A549 (cell line): ENCODE measurements at regions of chr5 and their contacts with region 1.

Region 1: DNA sequence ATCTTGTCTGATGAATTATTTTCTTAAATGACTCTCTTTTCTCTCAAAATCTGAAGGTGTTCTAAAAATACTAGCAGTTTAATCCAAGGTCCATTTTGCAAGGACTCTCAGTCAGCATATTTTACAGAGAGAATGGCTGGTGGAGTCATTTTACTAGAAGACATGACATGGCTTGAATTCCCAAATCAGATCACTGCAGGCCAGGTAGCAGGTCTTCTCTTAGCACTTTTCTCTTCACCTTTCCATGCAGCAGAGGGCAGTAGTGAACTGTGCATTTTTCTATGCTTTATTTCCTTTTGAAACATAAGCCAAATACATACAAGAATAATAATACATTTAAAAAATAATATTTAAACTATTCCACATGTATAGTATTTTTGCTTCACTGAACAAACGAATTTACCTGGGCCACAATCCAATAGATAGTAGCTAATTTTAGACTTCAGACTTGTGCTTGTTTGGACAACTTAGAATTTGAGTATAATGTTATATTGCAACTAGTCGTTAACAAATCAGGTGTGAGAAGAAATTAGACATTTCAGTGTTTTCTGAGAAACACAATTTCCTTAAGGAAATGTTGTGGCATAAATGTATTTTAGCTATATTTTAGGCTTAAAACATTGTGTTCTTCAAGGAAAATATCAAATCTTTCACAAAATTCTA is 289.4 kb upstream of the DAB2 start:
- DNase-seq: peak; percentile 27 to 81
- ATAC-seq: peak; percentile 71 to 72; a peak in 5 of 6 replicates
- H3K4me3 ChIP-seq: no peak overlapping the region
- H3K27ac ChIP-seq: peak overlapping the region; percentile 49; a peak in 4 of 6 replicates
- H3K4me1 ChIP-seq: peaks cover 39% of the 10 kb centered on the region
- CTCF ChIP-seq: peak; percentile 88
- EP300 ChIP-seq: no peak
- POLR2A ChIP-seq: no peak
- RAD21 ChIP-seq: peak; percentile 93

Region 2: DNA sequence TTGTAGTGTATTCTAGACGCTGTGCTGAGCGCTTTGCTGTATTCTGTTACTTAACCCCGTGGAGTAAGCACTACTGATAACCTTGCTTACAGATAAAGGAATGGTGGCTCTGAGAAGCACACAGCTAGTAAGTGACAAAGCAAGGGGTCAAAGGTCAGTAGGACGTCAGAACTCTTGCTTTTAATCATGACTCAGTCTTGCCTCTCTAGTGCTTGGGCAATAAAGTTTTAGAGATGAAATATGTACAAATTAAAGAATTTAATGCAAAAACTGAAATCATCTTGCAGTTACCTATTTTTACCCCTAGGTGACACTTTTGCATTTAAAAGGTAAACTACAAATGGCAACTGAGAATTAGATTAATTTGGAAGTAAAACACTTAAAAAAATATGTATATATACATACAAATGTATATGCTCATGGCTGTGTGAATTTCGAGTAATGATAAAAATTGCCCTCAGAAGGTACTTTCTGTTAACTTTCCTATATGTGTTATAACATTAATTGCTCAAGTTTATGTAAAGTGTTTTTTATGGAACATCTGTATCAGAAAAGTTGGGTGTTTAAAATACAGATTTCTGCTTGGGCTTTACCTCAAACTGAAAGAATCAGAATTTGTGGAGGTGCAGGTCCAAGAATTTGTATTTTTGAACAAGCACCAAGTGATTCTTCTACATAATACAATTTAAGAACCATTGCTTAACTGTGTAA is 114.3 kb before region 1 on chr5:
- CTCF ChIA-PET with region 1: interaction called, 10 read pairs
- POLR2A ChIA-PET with region 1: no interaction called
- DNase-seq: peak; percentile 17 to 67
- ATAC-seq: peak; percentile 54 to 73
- H3K4me3 ChIP-seq: no peak overlapping the region
- H3K27ac ChIP-seq: no peak overlapping the region
- H3K4me1 ChIP-seq: peaks cover 11% of the 10 kb centered on the region; the same call in 2 of the 3 replicates
- CTCF ChIP-seq: peak; percentile 72
- EP300 ChIP-seq: no peak
- POLR2A ChIP-seq: no peak
- RAD21 ChIP-seq: peak; percentile 75 to 77

Region 3: GRCh38 chr5:39700523-39700922 is 13.6 kb before region 1 on chr5:
- CTCF ChIA-PET with region 1: interaction called, 11 read pairs
- POLR2A ChIA-PET with region 1: no interaction called
- DNase-seq: no peak
- ATAC-seq: no peak
- H3K4me3 ChIP-seq: no peak overlapping the region
- H3K27ac ChIP-seq: no peak overlapping the region
- H3K4me1 ChIP-seq: no peaks in the 10 kb centered on the region
- CTCF ChIP-seq: no peak
- EP300 ChIP-seq: no peak
- POLR2A ChIP-seq: no peak
- RAD21 ChIP-seq: no peak

Region 4: DNA sequence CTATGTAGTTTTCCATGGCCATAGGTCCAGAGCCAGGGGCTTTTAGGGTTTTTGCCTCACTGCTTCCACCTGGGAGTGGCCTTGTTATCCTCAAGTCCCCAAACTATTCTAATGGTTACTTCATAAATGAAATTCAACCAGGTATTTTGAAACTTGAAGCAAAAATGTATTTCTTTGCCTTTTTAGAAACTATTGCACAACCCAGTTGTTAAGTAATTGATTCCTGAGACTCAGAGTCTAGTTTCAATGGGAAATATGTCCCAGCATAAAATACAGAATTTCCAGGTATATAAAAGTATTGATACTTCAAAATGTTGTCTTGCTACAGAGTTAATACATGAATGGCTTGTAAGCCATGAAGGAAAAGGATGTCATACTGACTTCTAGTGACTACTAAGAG is 166.8 kb after region 1 on chr5:
- CTCF ChIA-PET with region 1: no interaction called
- POLR2A ChIA-PET with region 1: no interaction called
- DNase-seq: no peak
- ATAC-seq: no peak
- H3K4me3 ChIP-seq: no peak overlapping the region
- H3K27ac ChIP-seq: no peak overlapping the region
- H3K4me1 ChIP-seq: no peaks in the 10 kb centered on the region
- CTCF ChIP-seq: no peak
- EP300 ChIP-seq: no peak
- POLR2A ChIP-seq: no peak
- RAD21 ChIP-seq: no peak

Region 5: GRCh38 chr5:39948867-39949468 is 234.8 kb after region 1 on chr5:
- CTCF ChIA-PET with region 1: interaction called, 16 read pairs
- POLR2A ChIA-PET with region 1: no interaction called
- DNase-seq: peak; percentile 26 to 77
- ATAC-seq: peak; percentile 74 to 86; a peak in 5 of 6 replicates
- H3K4me3 ChIP-seq: no peak overlapping the region
- H3K27ac ChIP-seq: no peak overlapping the region
- H3K4me1 ChIP-seq: no peaks in the 10 kb centered on the region
- CTCF ChIP-seq: peak; percentile 73
- EP300 ChIP-seq: no peak
- POLR2A ChIP-seq: no peak
- RAD21 ChIP-seq: peak; percentile 77 to 83

Region 6: DNA sequence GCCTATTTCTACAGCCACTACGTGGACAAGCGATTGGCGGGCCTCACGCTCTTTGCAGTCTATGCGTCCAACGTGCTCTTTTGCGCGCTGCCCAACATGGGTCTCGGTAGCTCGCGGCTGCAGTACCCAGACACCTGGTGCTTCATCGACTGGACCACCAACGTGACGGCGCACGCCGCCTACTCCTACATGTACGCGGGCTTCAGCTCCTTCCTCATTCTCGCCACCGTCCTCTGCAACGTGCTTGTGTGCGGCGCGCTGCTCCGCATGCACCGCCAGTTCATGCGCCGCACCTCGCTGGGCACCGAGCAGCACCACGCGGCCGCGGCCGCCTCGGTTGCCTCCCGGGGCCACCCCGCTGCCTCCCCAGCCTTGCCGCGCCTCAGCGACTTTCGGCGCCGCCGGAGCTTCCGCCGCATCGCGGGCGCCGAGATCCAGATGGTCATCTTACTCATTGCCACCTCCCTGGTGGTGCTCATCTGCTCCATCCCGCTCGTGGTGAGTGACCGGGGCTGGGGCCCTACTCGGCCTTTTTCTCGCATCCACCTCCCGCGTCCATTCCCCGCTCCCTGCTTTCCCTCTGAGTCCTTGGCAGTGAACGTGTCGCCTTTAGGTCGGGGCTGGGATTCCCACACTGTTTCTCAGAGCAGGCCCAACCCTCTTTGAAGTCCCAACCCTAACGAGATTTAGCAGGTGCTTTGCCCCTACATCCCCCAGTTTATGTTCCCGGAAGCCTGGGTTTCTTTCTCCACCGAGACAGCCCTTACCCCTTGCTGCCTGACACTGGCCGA is 967.4 kb after region 1 on chr5:
- CTCF ChIA-PET with region 1: interaction called, 48 read pairs
- POLR2A ChIA-PET with region 1: interaction called, 4 read pairs
- DNase-seq: no peak
- ATAC-seq: no peak
- H3K4me3 ChIP-seq: no peak overlapping the region
- H3K27ac ChIP-seq: no peak overlapping the region
- H3K4me1 ChIP-seq: peaks cover 19% of the 10 kb centered on the region
- CTCF ChIP-seq: no peak
- EP300 ChIP-seq: no peak
- POLR2A ChIP-seq: no peak
- RAD21 ChIP-seq: no peak

Region 7: DNA sequence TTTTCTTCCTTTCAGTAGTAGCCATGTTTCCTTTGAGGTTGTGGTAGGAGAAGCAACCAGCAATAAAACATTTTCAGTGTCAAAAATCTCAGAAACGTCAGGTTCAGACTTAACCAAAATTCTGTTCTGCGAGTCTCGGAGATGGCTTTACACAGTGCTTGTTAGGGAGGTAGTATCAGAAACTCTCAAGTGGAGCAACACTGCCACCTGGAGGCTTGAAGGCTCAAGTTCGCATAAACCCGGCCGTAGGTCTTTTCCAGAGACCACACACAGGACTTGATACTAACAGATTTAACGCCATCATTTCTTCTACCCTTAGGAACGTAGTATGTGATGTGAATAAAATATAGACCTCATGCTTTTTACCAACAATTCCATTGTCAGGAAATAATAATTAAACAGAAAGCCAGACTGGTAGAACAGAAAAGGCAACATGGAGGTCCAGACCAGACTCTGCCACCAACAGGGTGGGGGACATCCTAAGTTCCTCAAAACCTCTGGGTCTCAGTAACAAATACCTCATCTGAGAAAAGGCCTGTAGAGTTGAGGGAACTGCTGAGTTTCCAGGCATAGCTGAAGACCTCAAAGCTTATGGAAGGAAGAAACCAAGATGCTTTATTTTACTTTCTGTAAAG is 974.1 kb after region 1 on chr5:
- CTCF ChIA-PET with region 1: interaction called, 48 read pairs
- POLR2A ChIA-PET with region 1: no interaction called
- DNase-seq: peak; percentile 69 to 88
- ATAC-seq: peak; percentile 96 to 97
- H3K4me3 ChIP-seq: no peak overlapping the region
- H3K27ac ChIP-seq: peak overlapping the region; percentile 47 to 68; a peak in 4 of 6 replicates
- H3K4me1 ChIP-seq: peaks cover 29% of the 10 kb centered on the region
- CTCF ChIP-seq: peak; percentile 93
- EP300 ChIP-seq: no peak
- POLR2A ChIP-seq: no peak
- RAD21 ChIP-seq: peak; percentile 98 to 99

Region 8: GRCh38 chr5:40736103-40736875 is 1022.1 kb after region 1 on chr5:
- CTCF ChIA-PET with region 1: interaction called, 25 read pairs
- POLR2A ChIA-PET with region 1: no interaction called
- DNase-seq: peak; percentile 49 to 63
- ATAC-seq: peak; percentile 74 to 82; a peak in 4 of 6 replicates
- H3K4me3 ChIP-seq: no peak overlapping the region
- H3K27ac ChIP-seq: no peak overlapping the region
- H3K4me1 ChIP-seq: peaks cover 8% of the 10 kb centered on the region; the same call in 2 of the 3 replicates
- CTCF ChIP-seq: peak; percentile 89
- EP300 ChIP-seq: no peak
- POLR2A ChIP-seq: no peak
- RAD21 ChIP-seq: peak; percentile 84 to 87